ENCODE measurements at regions of chr17 and their contacts with region 1.

Region 1: DNA sequence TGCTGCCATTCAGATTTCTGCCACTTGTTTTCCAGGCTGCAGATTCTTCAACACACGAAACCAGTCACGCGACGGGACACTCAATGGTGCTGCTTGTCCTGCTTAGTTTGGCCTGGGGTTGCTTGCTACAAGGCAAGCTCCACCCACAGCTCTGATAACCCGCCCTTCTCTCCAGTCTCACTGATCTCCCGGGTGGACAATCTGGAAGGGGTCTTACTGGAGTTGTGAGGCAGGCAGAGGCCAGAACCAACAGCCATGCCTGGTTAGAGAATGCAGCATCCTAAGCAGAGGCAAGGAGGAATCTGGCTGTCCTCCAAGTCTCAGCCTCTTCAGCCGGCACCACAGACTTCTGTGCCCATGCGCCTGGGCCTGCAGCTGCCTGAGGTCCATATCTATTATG is 119.1 kb downstream of the KCNJ12 start:
- DNase-seq: no peak
- ATAC-seq: peak in 1 of 8 donors; percentile 18
- H3K4me3 ChIP-seq: no peak overlapping the region
- H3K27ac ChIP-seq: no peak overlapping the region
- H3K4me1 ChIP-seq: no peaks in the 10 kb centered on the region
- H3K27me3 ChIP-seq: peaks cover 0 to 13% (median 4%) of the 10 kb centered on the region in 7 donors
- CTCF ChIP-seq: no peak

Region 2: DNA sequence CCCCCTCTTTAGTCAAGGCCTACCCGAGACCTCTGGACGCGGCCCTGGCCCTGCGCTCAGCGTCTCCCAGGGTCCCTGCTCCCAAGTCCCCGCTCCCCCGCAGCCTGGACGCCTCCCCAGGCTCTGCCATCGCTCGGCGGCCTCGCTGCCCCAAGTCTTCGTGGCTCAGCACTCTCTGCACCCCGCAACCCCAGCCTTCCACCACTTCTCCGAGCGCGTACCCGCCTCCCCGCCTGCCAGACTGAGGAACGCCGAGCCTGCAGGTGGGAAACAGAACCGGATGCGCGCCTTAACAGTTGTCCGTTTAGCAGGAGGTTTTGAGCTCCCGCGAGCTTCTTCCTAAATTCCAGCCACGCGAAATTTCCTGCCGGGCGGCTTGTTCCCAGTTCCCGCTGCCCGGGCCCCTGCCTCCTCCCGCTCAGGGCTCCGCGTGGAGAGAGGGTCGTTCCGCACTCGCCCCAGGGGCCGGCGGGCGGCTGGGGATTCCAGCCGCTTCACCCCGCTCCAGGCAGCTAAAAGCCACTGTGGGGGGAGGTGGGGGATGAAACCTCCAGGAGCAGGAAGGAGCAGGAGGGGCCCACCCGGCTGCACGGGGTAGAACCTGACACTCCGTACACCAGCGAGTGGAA is 31.4 kb before region 1 on chr17:
- intact Hi-C with region 1: loop called in 2 of 10 experiments (anchors 5 kb)
- DNase-seq: peak in 1 of 2 donors; percentile 11
- ATAC-seq: peak in 3 of 8 donors; percentile 7 to 42 (median 31)
- H3K4me3 ChIP-seq: peak overlapping the region in 5 of 10 donors; percentile 23 to 37 (median 29)
- H3K27ac ChIP-seq: no peak overlapping the region
- H3K4me1 ChIP-seq: peaks cover 0 to 15% (median 10%) of the 10 kb centered on the region in 9 donors
- H3K27me3 ChIP-seq: peaks cover 0 to 19% (median 0%) of the 10 kb centered on the region in 7 donors
- CTCF ChIP-seq: no peak